Thyroid gland (tissue), 4 donors: ENCODE measurements at regions of chr4 and their contacts with region 1.

Region 1: GRCh38 chr4:76993787-76994641 is 44.5 kb downstream of the SEPTIN11 start:
- DNase-seq: peak; percentile 68 to 72
- H3K4me3 ChIP-seq: no peak overlapping the region
- H3K27ac ChIP-seq: no peak overlapping the region
- H3K4me1 ChIP-seq: peaks cover 0 to 7% of the 10 kb centered on the region in 2 donors
- H3K27me3 ChIP-seq: no peaks in the 10 kb centered on the region
- CTCF ChIP-seq: no peak
- POLR2A ChIP-seq: no peak

Region 2: GRCh38 chr4:76949276-76950051 is 44.5 kb before region 1 on chr4 and contains the start of gene SEPTIN11:
- intact Hi-C with region 1: loop called (anchors 5 kb)
- DNase-seq: peak; percentile 94 to 96
- H3K4me3 ChIP-seq: peak within 1 kb of the TSS; percentile 51 to 81 (median 63)
- H3K27ac ChIP-seq: peak within 1 kb of the TSS; percentile 87 to 95 (median 91)
- H3K4me1 ChIP-seq: peaks cover 14 to 17% of the 10 kb centered on the region in 2 donors
- H3K27me3 ChIP-seq: no peaks in the 10 kb centered on the region
- CTCF ChIP-seq: peak in 2 of 6 experiments; percentile 11 to 31
- POLR2A ChIP-seq: peak; percentile 46 to 94
- total RNA-seq, gene SEPTIN11: 39.6 to 207 (median 69.1) TPM